ACHN (cell line): ENCODE measurements at regions of chr10 and their contacts with region 1.

Region 1: GRCh38 chr10:78029269-78030226 is at the start of gene POLR3A:
- DNase-seq: peak; percentile 98

Region 2: GRCh38 chr10:78148961-78149610 is 119.5 kb after region 1 on chr10:
- in situ Hi-C with region 1: loop called (anchors 25 kb)
- DNase-seq: peak; percentile 15